ENCODE measurements at regions of chr11 and their contacts with region 1.

Region 1: DNA sequence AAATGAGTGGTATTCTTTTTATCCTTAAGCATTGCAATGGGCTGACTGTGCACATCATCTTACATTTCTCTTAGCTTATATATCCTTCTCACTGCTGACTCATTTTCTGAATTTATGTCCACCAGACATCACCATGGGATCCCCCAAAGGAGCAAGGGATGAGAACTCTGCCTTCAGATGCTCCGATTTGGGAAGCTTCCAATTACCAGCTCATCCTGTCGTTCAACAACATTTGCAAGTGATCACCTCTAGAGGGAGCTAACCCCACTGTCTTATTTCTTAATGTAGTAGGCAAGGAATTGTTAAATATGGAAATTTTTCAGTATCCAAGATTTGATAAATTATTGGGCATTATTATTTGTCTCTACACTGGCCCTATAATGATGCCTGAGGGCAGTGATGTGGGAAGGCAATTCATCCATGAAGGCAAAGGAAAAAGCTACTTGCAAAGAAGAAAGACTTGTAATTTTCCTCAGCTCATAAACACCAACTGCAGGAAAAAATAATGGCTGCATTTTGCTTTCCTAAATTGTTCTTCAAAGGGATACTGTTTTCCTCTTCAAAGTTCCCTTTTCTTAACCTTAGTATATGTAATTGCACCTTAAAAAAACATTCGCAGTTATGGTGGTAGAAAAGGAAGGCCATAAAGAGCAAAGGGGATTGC is 102.4 kb upstream of the FSHB start:
- DNase-seq: peak; percentile 67
- H3K4me3 Mint-ChIP-seq: no peak overlapping the region
- H3K27ac Mint-ChIP-seq: no peak overlapping the region
- H3K4me1 Mint-ChIP-seq: peaks cover 6% of the 10 kb centered on the region
- H3K27me3 Mint-ChIP-seq: no peaks in the 10 kb centered on the region
- CTCF ChIP-seq: peak; percentile 60

Region 2: GRCh38 chr11:29448246-29448877 is 680.0 kb before region 1 on chr11:
- CTCF ChIA-PET with region 1: interaction called, 14 read pairs
- POLR2A ChIA-PET with region 1: interaction called, 3 read pairs
- intact Hi-C with region 1: no loop called
- DNase-seq: peak; percentile 30
- H3K4me3 Mint-ChIP-seq: no peak overlapping the region
- H3K27ac Mint-ChIP-seq: no peak overlapping the region
- H3K4me1 Mint-ChIP-seq: no peaks in the 10 kb centered on the region
- H3K27me3 Mint-ChIP-seq: no peaks in the 10 kb centered on the region
- CTCF ChIP-seq: peak; percentile 66

Region 3: GRCh38 chr11:30062103-30062502 is 66.3 kb before region 1 on chr11:
- CTCF ChIA-PET with region 1: no interaction called
- POLR2A ChIA-PET with region 1: no interaction called
- intact Hi-C with region 1: no loop called
- DNase-seq: no peak
- H3K4me3 Mint-ChIP-seq: no peak overlapping the region
- H3K27ac Mint-ChIP-seq: no peak overlapping the region
- H3K4me1 Mint-ChIP-seq: no peaks in the 10 kb centered on the region
- H3K27me3 Mint-ChIP-seq: no peaks in the 10 kb centered on the region
- CTCF ChIP-seq: no peak

Region 4: GRCh38 chr11:30107899-30108298 is 20.5 kb before region 1 on chr11:
- CTCF ChIA-PET with region 1: interaction called, 42 read pairs
- POLR2A ChIA-PET with region 1: interaction called, 5 read pairs
- intact Hi-C with region 1: no loop called
- DNase-seq: peak; percentile 86
- H3K4me3 Mint-ChIP-seq: no peak overlapping the region
- H3K27ac Mint-ChIP-seq: peak overlapping the region; percentile 42
- H3K4me1 Mint-ChIP-seq: peaks cover 19% of the 10 kb centered on the region
- H3K27me3 Mint-ChIP-seq: no peaks in the 10 kb centered on the region
- CTCF ChIP-seq: no peak

Region 5: DNA sequence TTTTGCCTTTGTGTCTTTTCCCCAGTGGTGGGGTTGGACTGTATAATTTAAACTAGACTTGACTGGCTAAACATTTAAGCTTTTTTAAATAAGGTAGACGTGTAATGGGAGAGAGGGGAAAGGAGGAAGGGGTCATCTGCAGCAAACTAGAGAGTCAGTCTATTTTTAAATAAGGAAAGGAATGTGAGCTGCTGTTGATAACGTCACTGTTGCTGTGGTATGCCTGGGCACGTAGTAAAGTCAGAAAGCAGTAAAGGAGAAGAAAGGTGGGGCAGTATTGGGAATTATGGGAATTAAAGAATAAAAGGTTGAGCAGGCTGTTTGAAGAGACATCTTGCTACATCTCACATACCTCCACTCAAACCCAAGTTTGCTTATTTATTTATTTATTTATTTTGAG is 22.0 kb after region 1 on chr11:
- CTCF ChIA-PET with region 1: interaction called, 203 read pairs
- POLR2A ChIA-PET with region 1: interaction called, 4 read pairs
- intact Hi-C with region 1: no loop called
- DNase-seq: no peak
- H3K4me3 Mint-ChIP-seq: no peak overlapping the region
- H3K27ac Mint-ChIP-seq: no peak overlapping the region
- H3K4me1 Mint-ChIP-seq: peaks cover 19% of the 10 kb centered on the region
- H3K27me3 Mint-ChIP-seq: no peaks in the 10 kb centered on the region
- CTCF ChIP-seq: no peak

Region 6: GRCh38 chr11:30314625-30315024 is 186.2 kb after region 1 on chr11:
- CTCF ChIA-PET with region 1: interaction called, 275 read pairs
- POLR2A ChIA-PET with region 1: interaction called, 3 read pairs
- intact Hi-C with region 1: loop called (anchors 1 kb)
- DNase-seq: no peak
- H3K4me3 Mint-ChIP-seq: no peak overlapping the region
- H3K27ac Mint-ChIP-seq: no peak overlapping the region
- H3K4me1 Mint-ChIP-seq: no peaks in the 10 kb centered on the region
- H3K27me3 Mint-ChIP-seq: peaks cover 12% of the 10 kb centered on the region
- CTCF ChIP-seq: peak; percentile 63

Region 7: GRCh38 chr11:30917859-30918478 is 789.6 kb after region 1 on chr11:
- CTCF ChIA-PET with region 1: interaction called, 5 read pairs
- POLR2A ChIA-PET with region 1: no interaction called
- intact Hi-C with region 1: loop called (anchors 5 kb)
- DNase-seq: peak; percentile 58
- H3K4me3 Mint-ChIP-seq: no peak overlapping the region
- H3K27ac Mint-ChIP-seq: no peak overlapping the region
- H3K4me1 Mint-ChIP-seq: no peaks in the 10 kb centered on the region
- H3K27me3 Mint-ChIP-seq: peaks cover 84% of the 10 kb centered on the region
- CTCF ChIP-seq: peak; percentile 54

Measured in MCF 10A (cell line).